ENCODE measurements at regions of chr2 and their contacts with region 1.

Region 1: DNA sequence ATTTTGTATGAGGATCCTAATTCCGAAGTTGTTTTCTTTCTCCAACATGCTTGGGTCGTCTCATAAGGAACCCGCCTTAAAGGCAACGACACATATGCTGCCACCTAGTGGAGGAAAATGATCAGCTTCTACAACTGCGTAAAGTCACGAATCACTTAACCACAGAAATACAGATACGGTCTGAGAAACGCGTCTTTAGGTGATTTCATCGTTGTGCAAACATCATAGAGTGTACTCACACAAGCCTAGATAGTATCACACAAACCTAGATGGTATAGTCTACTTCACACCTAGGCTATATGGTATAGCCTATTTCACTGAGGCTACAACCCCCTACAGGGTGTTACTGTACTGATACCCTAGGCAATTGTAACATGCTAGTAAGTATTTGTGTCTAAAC is 13.1 kb downstream of the GNLY start:
- DNase-seq: peak; percentile 65
- H3K4me3 Mint-ChIP-seq: no peak overlapping the region
- H3K27ac Mint-ChIP-seq: no peak overlapping the region
- H3K4me1 Mint-ChIP-seq: peaks cover 28% of the 10 kb centered on the region
- H3K27me3 Mint-ChIP-seq: peaks cover 4% of the 10 kb centered on the region

Region 2: GRCh38 chr2:85635636-85636035 is 71.7 kb before region 1 on chr2:
- CTCF ChIA-PET with region 1: interaction called, 50 read pairs
- POLR2A ChIA-PET with region 1: no interaction called
- intact Hi-C with region 1: loop called (anchors 1 kb)
- DNase-seq: no peak
- H3K4me3 Mint-ChIP-seq: no peak overlapping the region
- H3K27ac Mint-ChIP-seq: no peak overlapping the region
- H3K4me1 Mint-ChIP-seq: peaks cover 5% of the 10 kb centered on the region
- H3K27me3 Mint-ChIP-seq: no peaks in the 10 kb centered on the region

Region 3: DNA sequence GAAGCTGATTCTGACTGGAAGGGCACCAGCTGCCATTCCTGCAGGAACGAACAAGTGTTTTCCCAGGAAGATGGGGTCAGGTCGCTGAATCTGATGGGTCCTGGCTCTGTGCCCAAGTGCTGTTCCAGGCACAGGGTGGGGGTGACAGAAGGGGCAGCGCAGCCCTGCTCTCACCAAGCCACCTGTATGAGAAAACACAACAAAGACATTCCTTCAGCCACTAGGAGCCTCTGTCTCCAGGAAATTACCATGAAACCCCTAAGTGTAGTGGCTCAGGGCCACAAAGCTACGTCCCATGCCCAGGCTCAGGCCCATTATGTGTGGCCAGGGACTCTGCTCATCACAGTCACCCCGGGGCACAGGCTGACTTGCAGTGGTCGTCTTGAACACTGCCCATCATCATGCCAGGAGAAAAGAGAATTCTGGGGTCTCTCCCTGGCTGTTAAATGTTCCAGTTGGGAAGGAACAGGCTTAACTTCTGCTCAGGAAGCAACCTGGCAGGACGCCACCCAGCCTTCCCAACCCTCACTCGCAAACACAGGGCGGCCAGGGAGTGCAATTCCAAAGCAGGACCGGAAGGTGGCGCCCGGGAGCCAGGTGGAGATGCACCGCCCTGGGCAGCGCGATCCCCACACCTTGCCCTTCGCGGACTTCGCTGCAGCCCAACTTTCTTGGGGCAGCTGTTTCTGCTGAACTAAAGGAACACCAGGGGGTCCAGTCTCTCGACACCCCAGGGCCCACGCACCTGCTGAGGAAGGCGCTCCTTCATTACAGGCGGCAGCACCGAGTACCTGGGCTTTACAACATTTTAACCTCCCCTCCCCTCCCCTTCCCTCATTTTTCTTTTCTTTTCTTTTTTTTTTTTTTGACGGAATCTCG is 28.3 kb before region 1 on chr2:
- CTCF ChIA-PET with region 1: interaction called, 96 read pairs
- POLR2A ChIA-PET with region 1: no interaction called
- intact Hi-C with region 1: loop called (anchors 1 kb)
- DNase-seq: peak; percentile 83
- H3K4me3 Mint-ChIP-seq: no peak overlapping the region
- H3K27ac Mint-ChIP-seq: no peak overlapping the region
- H3K4me1 Mint-ChIP-seq: peaks cover 3% of the 10 kb centered on the region
- H3K27me3 Mint-ChIP-seq: peaks cover 2% of the 10 kb centered on the region

Region 4: GRCh38 chr2:85718009-85718391 is 10.7 kb after region 1 on chr2:
- CTCF ChIA-PET with region 1: interaction called, 15 read pairs
- POLR2A ChIA-PET with region 1: no interaction called
- intact Hi-C with region 1: no loop called
- DNase-seq: no peak
- H3K4me3 Mint-ChIP-seq: no peak overlapping the region
- H3K27ac Mint-ChIP-seq: no peak overlapping the region
- H3K4me1 Mint-ChIP-seq: no peaks in the 10 kb centered on the region
- H3K27me3 Mint-ChIP-seq: no peaks in the 10 kb centered on the region

Region 5: GRCh38 chr2:85878719-85879385 is 171.5 kb after region 1 on chr2:
- CTCF ChIA-PET with region 1: no interaction called
- POLR2A ChIA-PET with region 1: no interaction called
- intact Hi-C with region 1: no loop called
- DNase-seq: no peak
- H3K4me3 Mint-ChIP-seq: no peak overlapping the region
- H3K27ac Mint-ChIP-seq: no peak overlapping the region
- H3K4me1 Mint-ChIP-seq: peaks cover 49% of the 10 kb centered on the region
- H3K27me3 Mint-ChIP-seq: no peaks in the 10 kb centered on the region